ENCODE measurements at regions of chr2 and their contacts with region 1.

Region 1: DNA sequence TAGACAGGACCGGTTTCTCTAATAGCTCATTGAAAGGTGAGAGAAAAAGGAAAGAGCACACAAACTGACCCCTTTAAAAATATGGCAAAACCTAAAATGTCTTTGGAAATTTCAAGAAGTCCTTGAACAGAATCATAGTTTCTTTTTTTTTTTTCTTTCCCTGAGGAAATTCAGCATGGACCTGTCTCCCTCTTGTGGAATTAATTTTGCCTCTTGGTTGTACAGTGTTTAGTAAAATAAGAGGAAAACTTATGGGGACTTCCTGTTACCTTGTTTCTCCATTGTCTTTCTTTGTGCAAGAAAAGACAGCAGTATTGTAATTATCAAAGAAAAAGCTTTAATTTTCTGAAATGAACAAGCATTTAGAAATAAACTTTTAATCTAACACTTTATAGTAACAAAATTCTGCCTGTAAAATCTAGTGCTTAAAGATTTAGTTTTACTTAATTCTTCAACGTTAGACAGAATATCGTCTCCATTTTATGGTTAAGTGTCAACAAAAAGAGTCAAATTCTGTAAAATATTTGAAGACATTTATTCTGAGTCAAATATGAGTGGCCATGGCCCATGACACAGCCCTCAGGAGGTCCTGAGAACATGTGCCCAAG is 176.3 kb upstream of the NABP1 start:
- DNase-seq: no peak
- H3K4me3 ChIP-seq: no peak overlapping the region
- H3K27ac ChIP-seq: no peak overlapping the region
- H3K4me1 ChIP-seq: peaks cover 0 to 7% of the 10 kb centered on the region in 2 donors
- H3K27me3 ChIP-seq: no peaks in the 10 kb centered on the region
- CTCF ChIP-seq: peak; percentile 40 to 75 (median 59)
- POLR2A ChIP-seq: no peak

Region 2: DNA sequence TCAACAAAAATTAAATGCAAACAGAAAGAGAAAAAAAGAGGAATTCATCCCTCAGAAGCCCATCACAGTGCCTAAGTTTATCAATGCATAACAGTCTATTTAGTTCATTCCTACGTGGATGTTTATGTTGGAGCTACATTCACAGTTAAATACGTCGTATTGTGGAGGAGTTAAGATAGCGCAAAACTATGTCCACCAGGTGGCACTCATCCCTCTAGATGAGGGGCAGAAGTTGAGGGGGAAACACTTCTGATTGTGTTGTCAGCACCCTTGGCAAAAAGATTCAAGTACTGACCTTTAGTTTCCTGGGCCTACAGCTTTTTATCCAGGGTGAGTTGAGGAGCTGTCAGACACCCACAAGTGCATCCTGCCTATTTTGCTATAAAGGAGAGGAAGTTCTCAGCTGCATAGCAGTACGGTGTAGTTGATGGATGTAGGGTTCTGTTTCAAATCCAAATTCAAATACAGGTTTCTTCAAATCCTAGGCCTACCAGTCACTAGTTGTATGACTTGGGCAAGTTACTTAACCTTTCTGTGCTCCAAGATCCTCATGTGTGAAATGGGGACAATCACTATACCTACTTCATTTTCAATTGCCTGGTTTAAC is 283.3 kb before region 1 on chr2:
- intact Hi-C with region 1: loop called in 1 of 2 experiments (anchors 5 kb)
- DNase-seq: peak in 6 of 7 donors; percentile 22 to 66 (median 43)
- H3K4me3 ChIP-seq: no peak overlapping the region
- H3K27ac ChIP-seq: no peak overlapping the region
- H3K4me1 ChIP-seq: no peaks in the 10 kb centered on the region
- H3K27me3 ChIP-seq: no peaks in the 10 kb centered on the region
- CTCF ChIP-seq: peak; percentile 35 to 62 (median 55)
- POLR2A ChIP-seq: no peak

Region 3: DNA sequence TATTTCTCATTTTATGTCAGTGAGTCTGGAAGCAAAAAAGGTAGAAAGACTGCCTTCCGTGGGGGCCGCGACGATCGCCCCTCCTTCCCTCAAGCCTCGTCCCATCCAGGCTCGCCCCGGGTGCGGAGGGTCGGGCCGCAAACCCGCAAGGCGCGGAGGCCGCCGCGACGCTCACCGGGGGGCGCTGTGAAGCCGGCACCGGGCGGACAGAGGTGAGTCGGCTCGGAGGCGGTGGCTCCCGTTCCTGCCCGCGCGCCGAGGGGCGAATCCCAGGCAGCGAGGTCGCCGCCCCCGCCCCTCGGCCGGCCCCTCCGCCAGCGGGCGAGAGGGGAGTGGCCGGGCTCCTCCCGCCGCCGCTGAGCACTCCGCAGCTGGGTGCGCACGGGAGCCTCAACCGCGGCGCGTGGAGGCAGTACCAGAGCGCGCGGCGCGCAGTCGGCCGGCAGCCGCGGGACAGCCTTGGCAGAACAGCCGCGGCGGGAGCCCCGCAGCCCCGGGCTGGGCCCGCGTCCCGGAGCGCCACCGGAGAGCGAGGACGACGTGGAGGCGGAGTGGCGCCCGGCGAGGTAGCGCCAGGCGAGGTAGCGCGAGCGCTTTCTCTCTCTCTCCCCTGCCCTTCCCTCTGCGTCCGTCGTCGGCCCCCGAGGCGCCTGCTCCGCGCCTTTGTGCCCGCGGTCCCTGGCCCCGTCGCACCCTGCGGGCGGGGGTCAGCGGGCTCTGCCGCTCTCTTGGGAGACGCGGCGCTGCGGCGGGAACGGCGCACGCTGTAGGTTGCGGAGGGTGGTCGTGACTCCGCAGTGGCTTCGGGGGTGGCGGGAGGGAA is 256.4 kb before region 1 on chr2 and contains the start of gene MYO1B:
- intact Hi-C with region 1: loop called in 1 of 2 experiments (anchors 10 kb)
- DNase-seq: peak in 5 of 7 donors; percentile 23 to 71 (median 36)
- H3K4me3 ChIP-seq: peak within 1 kb of the TSS in 2 of 4 donors; percentile 40 to 71
- H3K27ac ChIP-seq: peak within 1 kb of the TSS in 2 of 5 donors; percentile 59 to 78
- H3K4me1 ChIP-seq: peaks cover 9 to 11% of the 10 kb centered on the region in 2 donors
- H3K27me3 ChIP-seq: no peaks in the 10 kb centered on the region
- CTCF ChIP-seq: peak in 3 of 6 experiments; percentile 1 to 40 (median 6)
- POLR2A ChIP-seq: no peak
- total RNA-seq, gene MYO1B: 8.0 to 24.0 (median 15.4) TPM